Gastrocnemius medialis (tissue), 4 donors: ENCODE measurements at regions of chr18 and their contacts with region 1.

Region 1: DNA sequence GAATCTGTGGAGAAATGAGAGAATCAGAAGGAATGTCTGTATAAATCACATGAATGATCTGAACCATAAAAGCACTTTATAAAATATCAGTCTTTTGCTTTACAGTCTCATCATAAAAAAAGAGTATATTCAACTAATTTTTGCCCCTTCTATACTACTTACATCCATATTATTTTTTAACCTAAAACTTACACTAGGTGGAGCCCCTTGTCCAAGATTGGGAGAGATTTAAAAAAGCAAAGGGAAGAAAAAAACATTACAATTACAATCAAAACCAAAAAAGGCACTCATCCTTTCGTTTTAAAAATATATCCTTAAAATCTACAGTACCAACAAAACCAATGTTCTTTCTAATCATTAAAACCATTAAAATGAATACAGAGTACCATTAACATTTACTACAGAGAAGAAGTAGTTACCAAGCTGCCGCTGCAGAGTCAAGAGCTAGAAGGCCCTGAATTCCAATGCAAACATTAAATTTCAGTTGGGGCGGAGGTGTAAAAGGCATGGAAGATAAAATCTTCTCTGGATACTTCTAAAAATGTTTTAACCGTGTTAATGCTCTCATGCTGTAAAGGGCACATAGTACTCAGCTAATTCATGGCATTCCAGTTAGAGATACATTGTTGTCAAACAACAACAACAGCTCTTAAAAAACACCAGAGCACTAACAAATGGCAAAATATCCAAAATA is 56.7 kb upstream of the EPB41L3 start:
- DNase-seq: no peak
- ATAC-seq: no peak
- H3K4me3 ChIP-seq: no peak overlapping the region
- H3K27ac ChIP-seq: no peak overlapping the region
- H3K4me1 ChIP-seq: no peaks in the 10 kb centered on the region
- H3K27me3 ChIP-seq: no peaks in the 10 kb centered on the region
- CTCF ChIP-seq: peak in 2 of 5 experiments; percentile 16 to 27
- POLR2A ChIP-seq: no peak

Region 2: DNA sequence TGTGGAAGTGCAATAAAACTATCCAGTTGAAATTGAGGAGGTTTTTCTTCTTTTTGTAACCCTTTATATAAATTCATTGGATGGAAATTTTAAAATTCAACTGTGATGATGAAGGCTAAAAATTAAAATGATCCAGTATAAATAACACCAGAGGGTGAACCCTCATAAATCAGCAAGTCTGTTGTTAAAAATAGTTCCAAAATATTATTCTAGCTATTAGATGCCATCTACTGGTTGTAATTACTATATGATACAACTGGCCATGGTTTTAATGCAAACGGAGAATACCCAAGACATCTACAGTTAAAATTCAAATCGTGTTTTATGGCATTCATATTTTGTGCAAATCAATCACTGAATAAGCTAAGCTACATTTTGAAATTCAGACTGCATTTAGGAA is 241.0 kb after region 1 on chr18:
- in situ Hi-C with region 1: loop called in 1 of 4 experiments (anchors 25 kb)
- intact Hi-C with region 1: no loop called
- DNase-seq: no peak
- ATAC-seq: no peak
- H3K4me3 ChIP-seq: no peak overlapping the region
- H3K27ac ChIP-seq: no peak overlapping the region
- H3K4me1 ChIP-seq: no peaks in the 10 kb centered on the region
- H3K27me3 ChIP-seq: no peaks in the 10 kb centered on the region
- CTCF ChIP-seq: no peak
- POLR2A ChIP-seq: no peak

Region 3: DNA sequence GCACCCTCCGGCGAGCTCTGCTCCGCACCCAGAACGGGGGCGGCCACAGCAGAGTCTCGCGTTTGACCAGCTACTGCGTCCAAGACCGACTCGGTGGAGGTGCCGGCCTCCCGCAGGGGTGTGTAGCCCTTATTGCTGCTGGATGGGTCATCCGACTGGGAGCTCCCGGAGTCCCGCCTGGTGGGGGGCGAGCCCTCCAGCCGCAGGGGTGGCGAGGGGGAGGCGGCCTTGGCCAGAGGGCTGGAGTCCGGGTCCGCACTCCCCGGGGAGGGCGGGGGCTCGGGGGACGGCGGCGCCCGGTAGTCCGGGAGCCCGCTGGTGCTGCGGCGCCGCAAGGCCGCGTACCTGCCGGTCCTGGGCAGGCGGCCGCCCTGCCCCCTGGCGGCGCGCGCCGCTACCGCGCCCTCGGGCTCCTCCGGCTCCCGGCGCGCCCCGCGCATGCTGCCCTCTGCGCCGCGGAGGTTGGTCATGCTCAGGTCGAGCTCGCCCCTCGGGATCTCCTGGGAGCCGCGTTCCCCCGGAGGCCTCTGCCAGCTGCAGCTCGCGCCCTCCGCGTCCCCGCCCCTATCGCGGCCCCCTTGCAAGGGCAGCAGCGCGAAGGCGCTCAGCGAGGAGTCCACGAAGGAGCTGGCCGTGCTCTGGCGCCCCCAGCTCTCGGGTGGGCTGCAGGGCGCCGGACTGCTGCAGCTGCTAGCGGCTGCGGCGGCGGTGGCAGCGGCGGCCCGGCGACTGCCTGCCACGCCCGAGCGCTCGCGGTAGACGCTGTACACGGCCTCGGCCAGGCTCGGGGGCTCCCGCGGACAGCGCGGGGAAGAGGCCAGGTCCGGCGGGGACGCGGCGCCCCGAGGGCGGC is 290.0 kb after region 1 on chr18:
- in situ Hi-C with region 1: no loop called
- intact Hi-C with region 1: loop called (anchors 10 kb)
- DNase-seq: no peak
- ATAC-seq: peak; percentile 47 to 74
- H3K4me3 ChIP-seq: peak overlapping the region; percentile 42 to 60 (median 48)
- H3K27ac ChIP-seq: no peak overlapping the region
- H3K4me1 ChIP-seq: peaks cover 0 to 8% of the 10 kb centered on the region in 2 donors
- H3K27me3 ChIP-seq: peaks cover 23 to 50% (median 41%) of the 10 kb centered on the region in 3 donors
- CTCF ChIP-seq: peak in 4 of 5 experiments; percentile 28 to 70 (median 62)
- POLR2A ChIP-seq: no peak